ENCODE measurements at regions of chr7 and their contacts with region 1.

Region 1: GRCh38 chr7:146864644-146865043 is 748.0 kb downstream of the CNTNAP2 start:
- DNase-seq: no peak
- ATAC-seq: no peak
- H3K4me3 ChIP-seq: no peak overlapping the region
- H3K27ac ChIP-seq: no peak overlapping the region
- H3K4me1 ChIP-seq: no peaks in the 10 kb centered on the region
- H3K27me3 ChIP-seq: no peaks in the 10 kb centered on the region
- CTCF ChIP-seq: no peak

Region 2: DNA sequence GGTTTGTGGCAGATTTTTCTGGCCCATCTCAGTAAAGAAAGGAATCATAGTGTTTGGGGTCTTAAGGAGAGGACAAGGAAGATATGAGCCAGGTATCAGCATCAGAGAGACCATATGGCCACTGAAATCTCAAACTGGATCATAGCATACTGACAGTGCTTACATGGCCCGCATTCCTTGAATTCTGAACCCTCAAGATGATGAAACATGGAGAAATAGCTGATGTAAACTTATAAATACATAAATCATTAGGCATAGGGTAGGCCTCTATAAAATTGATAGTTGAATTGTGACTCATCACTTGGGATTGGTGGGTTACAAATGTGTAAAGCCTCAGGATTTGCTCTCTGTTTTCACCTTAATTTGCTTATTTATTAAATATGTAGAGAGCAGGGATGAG is 59.6 kb before region 1 on chr7:
- intact Hi-C with region 1: loop called in 1 of 10 experiments (anchors 10 kb)
- DNase-seq: no peak
- ATAC-seq: no peak
- H3K4me3 ChIP-seq: no peak overlapping the region
- H3K27ac ChIP-seq: no peak overlapping the region
- H3K4me1 ChIP-seq: no peaks in the 10 kb centered on the region
- H3K27me3 ChIP-seq: no peaks in the 10 kb centered on the region
- CTCF ChIP-seq: no peak

Region 3: GRCh38 chr7:146892151-146892550 is 27.5 kb after region 1 on chr7:
- intact Hi-C with region 1: no loop called
- DNase-seq: no peak
- ATAC-seq: no peak
- H3K4me3 ChIP-seq: no peak overlapping the region
- H3K27ac ChIP-seq: no peak overlapping the region
- H3K4me1 ChIP-seq: no peaks in the 10 kb centered on the region
- H3K27me3 ChIP-seq: no peaks in the 10 kb centered on the region
- CTCF ChIP-seq: no peak